CD8-positive, alpha-beta T cell (primary cell): ENCODE measurements at regions of chr14 and their contacts with region 1.

Region 1: DNA sequence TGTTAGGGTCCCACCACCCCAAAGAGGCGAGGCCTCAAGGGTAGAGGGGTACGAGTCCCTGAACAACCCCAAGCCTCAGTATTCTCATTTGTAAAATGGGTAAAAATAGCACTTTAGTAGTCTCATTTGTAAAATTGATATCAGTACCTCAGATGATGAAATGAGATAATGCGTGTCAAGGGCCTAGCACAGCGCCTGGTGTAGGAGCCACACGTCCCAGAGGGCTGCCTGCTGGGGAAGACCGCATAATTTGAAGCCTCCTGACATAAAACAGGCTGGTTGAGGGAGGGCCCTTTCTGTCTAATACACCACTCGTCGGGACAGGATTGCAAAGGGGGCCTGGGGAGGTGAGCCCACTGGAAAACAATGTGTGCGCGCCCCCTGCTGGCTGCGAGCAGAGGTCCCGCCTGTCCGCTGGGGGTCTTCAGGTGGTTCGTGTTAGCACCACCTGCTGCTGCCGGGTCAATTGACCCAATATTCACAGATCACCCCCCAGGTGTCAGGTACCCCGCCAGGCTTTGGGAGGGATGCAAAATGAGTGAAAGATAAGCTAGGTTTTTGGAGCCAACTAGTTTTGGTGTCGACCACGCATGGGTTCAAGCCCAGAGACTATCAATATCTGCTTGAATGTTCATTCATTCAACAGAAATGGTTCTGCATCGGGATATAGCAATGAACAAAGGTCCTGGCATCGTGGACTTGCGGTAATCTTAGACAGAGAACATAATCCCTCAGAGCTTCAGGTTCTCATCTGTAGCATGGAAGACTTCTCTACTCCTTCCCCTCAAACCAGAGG is 24.7 kb upstream of the IRF2BPL start:
- DNase-seq: peak; percentile 51 to 89 (median 82)
- ATAC-seq: peak; percentile 90
- H3K4me3 ChIP-seq: no peak overlapping the region
- H3K4me3 Mint-ChIP-seq: no peak overlapping the region
- H3K27ac ChIP-seq: no peak overlapping the region
- H3K27ac Mint-ChIP-seq: peak overlapping the region; percentile 22
- H3K4me1 ChIP-seq: peaks cover 10% of the 10 kb centered on the region
- H3K4me1 Mint-ChIP-seq: peaks cover 6% of the 10 kb centered on the region
- H3K27me3 ChIP-seq: no peaks in the 10 kb centered on the region
- H3K27me3 Mint-ChIP-seq: no peaks in the 10 kb centered on the region
- CTCF ChIP-seq: peak; percentile 98

Region 2: GRCh38 chr14:76904740-76905438 is 148.4 kb before region 1 on chr14:
- CTCF ChIA-PET with region 1: interaction called, 156 read pairs
- POLR2A ChIA-PET with region 1: no interaction called
- intact Hi-C with region 1: no loop called
- DNase-seq: peak; percentile 38 to 85 (median 77)
- ATAC-seq: peak; percentile 84
- H3K4me3 ChIP-seq: peak overlapping the region in 1 of 2 experiments; percentile 3
- H3K4me3 Mint-ChIP-seq: peak overlapping the region; percentile 61
- H3K27ac ChIP-seq: no peak overlapping the region
- H3K27ac Mint-ChIP-seq: peak overlapping the region; percentile 68
- H3K4me1 ChIP-seq: peaks cover 28% of the 10 kb centered on the region
- H3K4me1 Mint-ChIP-seq: peaks cover 23% of the 10 kb centered on the region
- H3K27me3 ChIP-seq: no peaks in the 10 kb centered on the region
- H3K27me3 Mint-ChIP-seq: no peaks in the 10 kb centered on the region
- CTCF ChIP-seq: no peak

Region 3: DNA sequence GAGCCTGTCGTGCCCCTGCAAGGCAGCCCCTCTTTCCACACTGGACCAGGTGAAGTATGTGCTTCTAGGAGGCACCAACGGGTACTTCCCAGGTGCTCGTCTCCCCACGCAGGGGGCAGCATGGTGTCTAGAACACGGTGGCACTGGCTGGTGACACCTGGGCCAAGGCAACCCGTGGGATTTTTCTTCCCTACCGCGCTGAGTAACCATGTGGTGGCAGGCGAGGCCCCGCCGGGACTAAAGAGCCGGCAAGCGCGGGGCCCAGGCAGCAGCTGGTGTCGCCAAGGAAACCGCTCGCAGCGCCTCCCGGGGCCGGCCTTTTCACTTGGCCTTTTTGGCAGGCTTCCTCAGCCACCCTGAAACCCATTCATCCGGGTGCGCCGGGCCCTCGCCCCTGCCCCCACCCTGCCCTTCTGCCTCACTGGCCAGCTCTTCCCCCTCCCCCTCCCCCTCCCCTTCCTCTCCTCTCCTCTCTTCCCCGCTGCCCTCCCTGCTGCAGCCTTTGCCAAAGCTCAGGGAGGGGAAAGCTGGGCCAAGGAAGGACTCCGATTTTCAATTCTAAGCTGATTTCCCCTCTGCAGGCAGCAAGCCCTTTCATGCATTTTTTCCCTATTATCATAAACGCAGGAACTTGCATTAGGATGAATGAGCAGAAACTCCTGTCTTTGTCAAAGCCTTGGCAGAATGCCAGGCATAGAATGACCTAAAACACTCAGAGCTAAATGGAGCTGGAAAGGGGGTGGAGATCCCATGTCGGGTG is 106.0 kb before region 1 on chr14:
- CTCF ChIA-PET with region 1: interaction called, 27 read pairs
- POLR2A ChIA-PET with region 1: interaction called, 3 read pairs
- intact Hi-C with region 1: loop called (anchors 1 kb)
- DNase-seq: peak; percentile 52 to 90 (median 80)
- ATAC-seq: peak; percentile 96
- H3K4me3 ChIP-seq: no peak overlapping the region
- H3K4me3 Mint-ChIP-seq: no peak overlapping the region
- H3K27ac ChIP-seq: peak overlapping the region in 1 of 2 experiments; percentile 19
- H3K27ac Mint-ChIP-seq: peak overlapping the region; percentile 60
- H3K4me1 ChIP-seq: peaks cover 13% of the 10 kb centered on the region
- H3K4me1 Mint-ChIP-seq: peaks cover 19% of the 10 kb centered on the region
- H3K27me3 ChIP-seq: no peaks in the 10 kb centered on the region
- H3K27me3 Mint-ChIP-seq: no peaks in the 10 kb centered on the region
- CTCF ChIP-seq: peak; percentile 46

Region 4: GRCh38 chr14:76962303-76962660 is 91.0 kb before region 1 on chr14:
- CTCF ChIA-PET with region 1: interaction called, 21 read pairs
- POLR2A ChIA-PET with region 1: no interaction called
- intact Hi-C with region 1: no loop called
- DNase-seq: no peak
- ATAC-seq: peak; percentile 3
- H3K4me3 ChIP-seq: peak overlapping the region; percentile 44 to 59
- H3K4me3 Mint-ChIP-seq: peak overlapping the region; percentile 84
- H3K27ac ChIP-seq: peak overlapping the region; percentile 63 to 78
- H3K27ac Mint-ChIP-seq: peak overlapping the region; percentile 97
- H3K4me1 ChIP-seq: peaks cover 59% of the 10 kb centered on the region
- H3K4me1 Mint-ChIP-seq: peaks cover 73% of the 10 kb centered on the region
- H3K27me3 ChIP-seq: no peaks in the 10 kb centered on the region
- H3K27me3 Mint-ChIP-seq: no peaks in the 10 kb centered on the region
- CTCF ChIP-seq: no peak

Region 5: GRCh38 chr14:77028384-77029231 is 24.6 kb before region 1 on chr14 and contains the start of gene IRF2BPL:
- CTCF ChIA-PET with region 1: interaction called, 24 read pairs
- POLR2A ChIA-PET with region 1: interaction called, 3 read pairs
- intact Hi-C with region 1: loop called (anchors 1 kb)
- DNase-seq: peak; percentile 86 to 98 (median 94)
- ATAC-seq: peak; percentile 68
- H3K4me3 ChIP-seq: peak within 1 kb of the TSS; percentile 66 to 94
- H3K4me3 Mint-ChIP-seq: peak within 1 kb of the TSS; percentile 93
- H3K27ac ChIP-seq: peak within 1 kb of the TSS; percentile 90 to 94
- H3K27ac Mint-ChIP-seq: peak within 1 kb of the TSS; percentile 96
- H3K4me1 ChIP-seq: peaks cover 69% of the 10 kb centered on the region
- H3K4me1 Mint-ChIP-seq: peaks cover 60% of the 10 kb centered on the region
- H3K27me3 ChIP-seq: no peaks in the 10 kb centered on the region
- H3K27me3 Mint-ChIP-seq: no peaks in the 10 kb centered on the region
- CTCF ChIP-seq: peak; percentile 2
- total RNA-seq, gene IRF2BPL: 53.7 to 53.9 TPM

Region 6: DNA sequence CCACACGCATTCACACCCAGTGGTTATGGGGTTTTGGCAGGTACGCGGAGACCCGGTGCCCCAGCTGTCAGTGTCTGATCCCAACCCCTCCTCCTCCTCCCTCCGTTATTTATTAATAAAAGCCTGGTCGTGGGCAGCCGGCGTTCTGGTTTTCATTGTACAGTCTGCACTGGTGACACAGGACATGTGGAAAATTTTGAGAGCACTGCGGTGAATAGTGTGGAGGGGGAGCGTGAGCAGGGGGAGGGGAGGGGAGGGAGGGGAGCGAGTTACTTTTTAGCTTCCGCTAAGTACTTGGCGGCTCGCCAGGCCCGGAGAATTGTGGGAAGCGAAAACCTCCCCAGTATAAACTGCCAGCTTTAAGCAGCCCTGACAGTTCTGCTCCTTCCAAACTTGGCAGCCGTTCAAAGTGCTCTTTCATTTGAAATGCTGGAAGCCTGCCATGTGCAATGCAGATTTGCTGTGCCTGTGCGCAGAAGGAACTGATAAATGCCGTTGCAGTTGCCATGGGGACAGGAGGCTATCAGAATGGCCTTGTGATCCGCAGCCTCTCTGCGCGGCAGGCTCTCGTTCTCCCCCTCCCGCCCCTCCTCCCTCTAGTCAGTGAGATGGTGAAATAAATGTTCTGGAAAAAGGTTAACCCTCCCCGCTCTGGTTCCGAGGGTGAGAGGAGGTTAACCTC is 13.0 kb before region 1 on chr14:
- CTCF ChIA-PET with region 1: interaction called, 62 read pairs
- POLR2A ChIA-PET with region 1: interaction called, 4 read pairs
- intact Hi-C with region 1: loop called in 1 of 2 experiments (anchors 1 kb)
- DNase-seq: peak; percentile 94 to 100 (median 99)
- ATAC-seq: peak; percentile 77
- H3K4me3 ChIP-seq: peak overlapping the region; percentile 42 to 47
- H3K4me3 Mint-ChIP-seq: peak overlapping the region; percentile 86
- H3K27ac ChIP-seq: peak overlapping the region; percentile 90 to 94
- H3K27ac Mint-ChIP-seq: peak overlapping the region; percentile 99
- H3K4me1 ChIP-seq: peaks cover 74% of the 10 kb centered on the region
- H3K4me1 Mint-ChIP-seq: peaks cover 90% of the 10 kb centered on the region
- H3K27me3 ChIP-seq: no peaks in the 10 kb centered on the region
- H3K27me3 Mint-ChIP-seq: no peaks in the 10 kb centered on the region
- CTCF ChIP-seq: no peak